AG04449 (cell line): ENCODE measurements at regions of chr6 and their contacts with region 1.

Region 1: DNA sequence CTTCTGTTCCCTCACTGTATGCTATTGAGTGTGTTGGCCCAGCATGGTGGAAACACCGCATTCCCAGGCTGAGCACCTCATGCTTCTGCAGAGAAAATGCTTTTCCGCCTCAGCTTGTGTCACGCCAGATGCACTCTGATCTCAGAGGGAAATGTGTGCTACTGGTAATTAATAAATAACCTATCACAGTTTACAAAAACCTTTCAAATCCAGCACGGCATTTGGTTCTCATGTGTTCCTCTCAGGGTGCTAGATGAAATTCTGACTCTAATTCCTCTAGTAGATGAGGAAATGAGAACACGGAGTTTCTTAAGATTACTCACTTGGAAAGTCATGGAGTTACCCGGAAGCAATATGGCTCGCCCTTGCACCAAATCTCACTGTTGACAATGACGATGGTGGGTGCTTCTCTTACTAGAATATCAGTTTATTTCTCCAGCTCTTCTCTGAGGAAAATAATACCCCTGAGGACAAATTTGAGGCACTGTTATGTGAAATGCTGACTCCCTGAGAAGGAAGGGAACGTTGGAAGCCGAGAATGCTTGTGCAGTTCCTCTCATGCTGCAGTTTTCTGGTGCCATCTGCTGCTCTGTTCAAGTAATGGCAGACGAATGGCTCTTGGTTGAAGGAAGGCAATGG is 116.6 kb downstream of the RNF144B start:
- DNase-seq: no peak
- H3K4me3 ChIP-seq: peak overlapping the region; percentile 3; the same call in 1 of the 2 replicates
- CTCF ChIP-seq: peak; percentile 89

Region 2: DNA sequence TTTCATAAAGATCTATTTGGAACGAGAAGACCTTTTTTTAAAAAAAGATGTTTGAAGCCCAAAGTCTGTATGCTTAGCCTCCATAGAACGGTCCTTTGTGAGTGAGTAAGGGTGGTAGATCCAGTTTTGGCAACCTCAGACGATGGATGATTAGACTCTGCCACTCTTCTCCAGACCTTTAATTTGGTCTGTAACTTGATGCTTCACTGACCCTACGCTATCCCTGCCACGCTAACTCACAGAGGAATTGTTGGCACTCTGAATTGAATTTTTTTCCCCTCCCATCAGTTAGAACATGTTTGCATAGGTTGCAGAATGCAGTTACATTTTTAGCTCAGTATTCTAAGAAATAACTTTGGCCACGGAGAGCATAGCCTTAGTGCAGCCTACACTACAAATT is 223.6 kb before region 1 on chr6:
- CTCF ChIA-PET with region 1: interaction called, 14 read pairs
- POLR2A ChIA-PET with region 1: no interaction called
- DNase-seq: no peak
- H3K4me3 ChIP-seq: no peak overlapping the region
- CTCF ChIP-seq: no peak

Region 3: DNA sequence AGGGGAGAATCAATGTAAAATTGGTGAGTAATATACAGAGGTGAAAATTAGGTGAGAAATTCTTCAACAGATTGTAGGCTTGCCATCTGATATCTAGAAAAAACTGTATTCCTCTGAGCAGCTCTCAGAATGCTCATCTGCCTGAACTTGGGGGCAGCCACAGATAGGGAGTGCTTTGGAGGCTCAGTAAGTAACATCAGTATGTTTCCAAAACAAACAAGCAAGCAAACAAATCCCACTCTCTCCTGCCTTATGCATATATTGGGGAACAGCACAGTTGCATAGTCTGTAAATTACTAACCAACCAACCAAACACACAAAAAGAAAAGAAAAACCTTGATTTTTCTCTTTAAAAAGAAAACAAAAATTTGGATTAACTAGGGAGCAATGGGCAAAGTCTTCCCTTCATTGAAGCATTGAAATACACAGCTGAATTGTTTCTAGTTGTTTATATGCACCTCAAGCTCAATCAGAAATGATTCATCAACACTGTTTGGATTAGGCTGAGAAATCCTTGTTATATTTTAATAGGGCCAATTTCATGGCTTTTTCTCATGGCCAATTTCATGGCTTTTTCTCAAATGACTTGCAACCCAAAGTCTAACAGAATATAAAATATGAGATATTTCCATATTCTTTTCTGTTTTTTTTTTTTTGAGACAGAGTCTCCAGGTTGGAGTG is 189.3 kb before region 1 on chr6:
- CTCF ChIA-PET with region 1: interaction called, 490 read pairs
- POLR2A ChIA-PET with region 1: no interaction called
- DNase-seq: no peak
- H3K4me3 ChIP-seq: no peak overlapping the region
- CTCF ChIP-seq: no peak

Region 4: GRCh38 chr6:18334251-18334650 is 169.5 kb before region 1 on chr6:
- CTCF ChIA-PET with region 1: interaction called, 490 read pairs
- POLR2A ChIA-PET with region 1: no interaction called
- DNase-seq: no peak
- H3K4me3 ChIP-seq: no peak overlapping the region
- CTCF ChIP-seq: no peak

Region 5: DNA sequence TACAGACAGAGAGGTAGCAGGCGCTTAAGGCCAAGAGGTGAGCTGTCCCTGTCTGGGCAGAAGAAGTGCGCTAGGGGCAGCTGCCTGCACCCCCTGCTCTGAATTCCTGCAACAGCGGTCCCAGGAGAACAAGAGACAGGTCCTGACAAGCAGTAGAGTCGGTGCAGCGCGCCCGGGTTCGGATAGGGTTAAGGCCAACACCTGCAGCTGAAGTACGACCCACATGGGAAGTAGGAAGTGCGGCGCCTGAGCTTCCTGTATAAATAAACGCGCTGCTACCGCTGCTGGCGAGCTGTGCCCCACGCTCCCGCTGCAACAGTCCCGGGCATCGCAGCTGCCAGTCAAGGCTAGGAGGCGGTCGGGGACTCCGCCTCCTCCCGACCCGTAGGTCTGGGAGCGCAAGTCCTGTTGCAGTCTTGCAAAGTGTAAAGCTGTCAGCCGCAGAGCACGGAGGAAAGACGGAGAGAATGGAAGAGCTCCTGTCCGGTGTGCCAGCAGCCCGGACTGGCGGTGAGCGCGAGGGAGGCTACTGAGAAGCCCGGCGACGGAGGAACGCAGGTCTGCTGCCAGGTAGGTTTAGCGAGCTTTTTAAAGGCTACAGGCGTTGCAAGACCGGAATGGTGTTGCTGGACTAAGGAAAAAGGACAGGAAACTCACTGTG is 116.5 kb before region 1 on chr6 and contains the start of gene RNF144B:
- CTCF ChIA-PET with region 1: interaction called, 11 read pairs
- POLR2A ChIA-PET with region 1: no interaction called
- DNase-seq: no peak
- H3K4me3 ChIP-seq: peak within 1 kb of the TSS; percentile 77
- CTCF ChIP-seq: no peak